ENCODE measurements at regions of chr1 and their contacts with region 1.

Region 1: GRCh38 chr1:183685112-183685713 is 32.1 kb upstream of the APOBEC4 start:
- DNase-seq: peak; percentile 45
- H3K4me3 Mint-ChIP-seq: no peak overlapping the region
- H3K27ac Mint-ChIP-seq: no peak overlapping the region
- H3K4me1 Mint-ChIP-seq: no peaks in the 10 kb centered on the region
- H3K27me3 Mint-ChIP-seq: peaks cover 13% of the 10 kb centered on the region

Region 2: GRCh38 chr1:183655562-183656075 is 29.6 kb before region 1 on chr1:
- CTCF ChIA-PET with region 1: interaction called, 12 read pairs
- POLR2A ChIA-PET with region 1: no interaction called
- DNase-seq: peak; percentile 78
- H3K4me3 Mint-ChIP-seq: no peak overlapping the region
- H3K27ac Mint-ChIP-seq: no peak overlapping the region
- H3K4me1 Mint-ChIP-seq: peaks cover 36% of the 10 kb centered on the region
- H3K27me3 Mint-ChIP-seq: peaks cover under 1% of the 10 kb centered on the region

Measured in activated CD4-positive, alpha-beta T cell treated with anti-CD3 and anti-CD28 coated beads, Interleukin-2, amount 10 ng/mL, durations not matched to agents 7 days and 5 days (primary cell).